Sigmoid colon (tissue), 7 donors: ENCODE measurements at regions of chr6 and their contacts with region 1.

Region 1: DNA sequence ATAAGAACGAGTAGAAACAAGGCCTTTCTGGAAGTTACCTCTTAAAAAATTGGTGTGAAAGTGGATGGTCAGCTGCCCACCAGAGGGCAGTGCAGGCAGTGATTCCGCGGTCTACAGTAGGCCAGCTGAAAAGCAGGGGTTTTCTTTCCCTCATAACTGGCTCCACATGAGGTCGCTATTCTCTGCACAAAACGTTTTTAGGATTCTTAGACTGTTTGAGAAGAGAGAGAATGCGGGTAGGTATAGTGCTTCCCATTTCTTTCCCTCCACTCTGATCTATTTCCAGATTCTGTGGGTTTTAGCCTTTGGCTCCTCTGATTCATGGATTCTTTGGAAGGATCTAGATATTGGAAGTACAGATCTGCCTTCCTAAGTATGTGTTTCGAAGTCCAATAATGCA is 14.2 kb downstream of the FIG4 start:
- DNase-seq: peak; percentile 80
- H3K4me3 ChIP-seq: no peak overlapping the region
- H3K27ac ChIP-seq: no peak overlapping the region
- H3K4me1 ChIP-seq: peaks cover 0 to 4% (median 2%) of the 10 kb centered on the region in 4 donors
- H3K27me3 ChIP-seq: no peaks in the 10 kb centered on the region
- CTCF ChIP-seq: peak; percentile 63 to 94 (median 86)
- EP300 ChIP-seq: no peak
- POLR2A ChIP-seq: no peak

Region 2: DNA sequence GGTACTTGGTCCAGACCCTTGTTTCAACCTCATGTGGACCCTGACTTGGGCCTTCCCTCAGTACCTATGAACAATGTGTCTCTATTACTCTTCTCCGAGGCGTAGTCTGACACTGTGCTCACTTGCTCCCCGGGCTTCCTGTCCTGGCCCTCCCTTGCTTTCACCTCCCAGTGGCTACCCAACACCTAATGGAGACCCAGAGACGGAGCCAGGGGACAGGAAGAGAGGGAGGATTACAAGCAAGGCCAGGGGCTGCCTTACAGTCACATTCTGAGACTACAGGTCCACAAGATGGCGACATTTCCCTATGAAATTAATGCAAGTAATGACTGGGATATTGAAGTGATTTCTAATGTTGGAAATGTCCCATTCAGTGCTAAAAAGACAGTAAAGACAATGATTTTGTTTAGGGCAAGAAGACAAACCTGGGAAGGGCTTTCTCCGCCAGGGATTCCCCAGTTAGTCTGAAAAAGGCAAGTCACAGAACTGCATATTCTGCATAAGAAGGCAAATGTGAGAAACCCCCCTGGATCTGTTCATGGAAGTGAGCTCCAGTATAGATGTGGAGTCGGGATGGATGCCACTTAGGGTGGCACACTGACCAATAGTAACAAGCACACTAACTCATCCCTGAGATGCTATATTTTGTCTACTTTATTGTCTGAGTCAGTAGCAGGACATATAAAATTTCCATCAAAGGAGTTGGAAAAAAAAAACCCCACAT is 178.2 kb before region 1 on chr6:
- intact Hi-C with region 1: no loop called
- DNase-seq: no peak
- H3K4me3 ChIP-seq: no peak overlapping the region
- H3K27ac ChIP-seq: no peak overlapping the region
- H3K4me1 ChIP-seq: peaks cover 0 to 10% (median 7%) of the 10 kb centered on the region in 4 donors
- H3K27me3 ChIP-seq: no peaks in the 10 kb centered on the region
- CTCF ChIP-seq: peak in 2 of 4 experiments; percentile 21 to 45
- EP300 ChIP-seq: no peak
- POLR2A ChIP-seq: no peak

Region 3: GRCh38 chr6:109799616-109800015 is 94.4 kb after region 1 on chr6:
- intact Hi-C with region 1: no loop called
- DNase-seq: no peak
- H3K4me3 ChIP-seq: no peak overlapping the region
- H3K27ac ChIP-seq: no peak overlapping the region
- H3K4me1 ChIP-seq: no peaks in the 10 kb centered on the region
- H3K27me3 ChIP-seq: no peaks in the 10 kb centered on the region
- CTCF ChIP-seq: no peak
- EP300 ChIP-seq: no peak
- POLR2A ChIP-seq: no peak

Region 4: DNA sequence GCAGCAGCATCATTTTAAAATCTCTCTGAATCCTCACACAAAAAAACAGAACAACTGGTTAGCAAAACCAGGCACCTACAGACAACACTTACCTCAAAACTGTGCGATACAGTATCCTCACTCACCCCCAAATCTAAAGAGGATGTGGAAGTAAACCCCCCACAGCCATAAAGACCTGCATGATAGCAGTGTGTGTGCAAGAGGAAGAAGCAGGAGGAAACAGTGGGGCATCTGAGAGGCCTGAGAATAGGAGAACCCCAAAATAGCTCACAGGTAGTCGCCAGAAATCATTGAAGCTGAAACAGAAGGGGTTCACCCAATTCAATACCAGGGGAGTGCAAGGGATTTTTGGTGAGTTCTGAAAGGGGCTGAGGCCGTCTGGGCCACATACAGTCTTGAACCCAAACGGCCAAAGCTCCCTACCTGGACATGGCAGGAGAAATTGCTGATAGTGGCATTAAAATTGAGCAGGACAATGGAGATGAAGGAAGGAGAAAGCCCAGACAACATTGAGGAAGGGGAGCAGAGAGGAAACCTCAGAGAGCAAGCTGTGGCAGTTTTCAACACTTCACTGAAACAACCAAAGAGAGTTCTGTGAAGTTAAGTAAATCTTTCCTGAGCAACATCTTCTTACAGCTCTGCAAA is 115.6 kb after region 1 on chr6:
- intact Hi-C with region 1: no loop called
- DNase-seq: no peak
- H3K4me3 ChIP-seq: no peak overlapping the region
- H3K27ac ChIP-seq: no peak overlapping the region
- H3K4me1 ChIP-seq: no peaks in the 10 kb centered on the region
- H3K27me3 ChIP-seq: no peaks in the 10 kb centered on the region
- CTCF ChIP-seq: no peak
- EP300 ChIP-seq: no peak
- POLR2A ChIP-seq: no peak

Region 5: DNA sequence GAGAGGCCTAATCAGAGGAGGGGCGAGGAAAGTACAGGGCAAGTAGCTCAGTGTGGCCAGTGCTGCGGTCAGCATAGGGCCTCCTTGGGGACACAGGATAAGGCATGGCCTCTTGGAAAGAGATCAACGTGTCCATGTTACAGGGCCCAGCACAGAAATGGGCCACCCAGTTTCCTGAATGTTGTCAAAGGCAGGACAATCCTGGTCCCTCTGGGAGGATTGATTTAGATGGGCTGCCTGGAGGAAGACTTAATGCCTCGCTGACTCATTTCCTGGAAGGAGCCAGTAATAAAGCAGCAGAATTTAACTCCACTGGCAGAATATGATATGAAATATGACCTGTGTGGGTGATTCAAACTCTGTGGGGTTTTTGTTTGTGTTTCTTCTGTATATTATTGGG is 693.5 kb after region 1 on chr6:
- intact Hi-C with region 1: loop called (anchors 10 kb)
- DNase-seq: no peak
- H3K4me3 ChIP-seq: no peak overlapping the region
- H3K27ac ChIP-seq: no peak overlapping the region
- H3K4me1 ChIP-seq: peaks cover 0 to 11% (median 6%) of the 10 kb centered on the region in 4 donors
- H3K27me3 ChIP-seq: no peaks in the 10 kb centered on the region
- CTCF ChIP-seq: no peak
- EP300 ChIP-seq: no peak
- POLR2A ChIP-seq: no peak